Left ventricle myocardium superior (tissue), 1 donor: ENCODE measurements at regions of chr2 and their contacts with region 1.

Region 1: DNA sequence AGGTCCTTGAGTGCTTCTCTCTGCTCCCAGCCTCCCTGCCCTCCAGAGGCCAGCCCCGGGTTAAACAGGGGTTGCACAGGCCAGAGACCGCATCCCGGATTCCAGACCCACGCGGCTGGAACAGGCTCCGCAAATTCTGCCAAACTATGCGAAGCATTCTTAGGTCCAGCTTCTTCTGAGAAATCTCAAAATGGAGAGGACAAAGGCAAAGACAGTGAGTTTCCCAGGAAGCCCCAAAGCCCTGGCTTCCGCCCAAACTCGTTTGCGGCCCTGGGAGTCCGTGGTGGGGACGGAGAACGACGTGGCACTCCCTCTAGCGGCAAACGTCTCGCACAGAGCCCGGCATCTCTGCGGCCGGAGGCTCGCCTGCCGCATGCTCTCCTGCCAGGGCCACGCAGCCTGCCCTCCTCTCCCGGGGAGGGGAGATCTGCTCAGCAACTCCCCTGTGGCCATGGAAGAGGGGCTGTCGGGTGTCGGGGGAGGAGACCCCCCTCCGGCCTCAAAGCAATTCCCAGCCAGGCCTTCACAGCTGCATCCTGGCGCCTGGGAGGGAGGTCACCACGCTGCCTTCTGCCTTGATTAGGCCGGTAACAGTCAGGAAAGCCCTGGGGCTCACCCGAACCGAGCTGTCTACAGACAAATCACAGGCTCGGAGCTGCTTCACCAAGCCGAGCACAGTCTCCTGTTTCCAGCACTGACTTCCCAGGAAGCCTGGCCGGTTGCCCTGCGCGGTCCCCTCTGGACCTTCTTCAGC is 33.4 kb upstream of the KLHL29 start:
- DNase-seq: peak; percentile 92
- ATAC-seq: peak; percentile 98

Region 2: DNA sequence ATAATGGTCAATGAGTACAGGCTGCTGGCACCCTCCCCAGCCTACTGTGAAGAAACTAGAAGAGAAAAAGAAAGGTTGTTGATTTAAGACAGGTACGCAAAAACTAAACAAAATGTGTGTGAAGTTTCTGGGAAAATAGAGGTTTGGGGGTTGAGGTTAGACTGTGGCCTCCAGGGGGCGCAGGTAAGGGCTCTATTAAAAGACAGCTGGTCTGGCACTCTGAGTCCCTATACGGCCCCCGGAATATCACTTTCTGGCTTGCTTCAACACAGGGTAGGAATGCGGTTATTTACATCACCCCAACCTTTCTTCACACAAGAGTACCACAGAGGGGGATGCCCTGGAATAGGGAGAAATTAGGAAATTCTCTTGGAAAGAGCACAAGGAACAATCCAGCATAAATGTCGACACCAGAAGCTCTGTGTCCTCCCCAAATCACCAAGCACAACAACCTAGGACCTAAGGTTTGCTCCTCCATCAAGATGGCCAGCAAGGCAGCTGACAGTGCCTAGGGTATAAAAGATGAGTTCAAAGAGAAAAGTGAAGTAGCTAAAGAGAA is 447.4 kb before region 1 on chr2:
- intact Hi-C with region 1: loop called (anchors 10 kb)
- DNase-seq: peak; percentile 58
- ATAC-seq: peak; percentile 27